ENCODE measurements at regions of chr9 and their contacts with region 1.

Region 1: DNA sequence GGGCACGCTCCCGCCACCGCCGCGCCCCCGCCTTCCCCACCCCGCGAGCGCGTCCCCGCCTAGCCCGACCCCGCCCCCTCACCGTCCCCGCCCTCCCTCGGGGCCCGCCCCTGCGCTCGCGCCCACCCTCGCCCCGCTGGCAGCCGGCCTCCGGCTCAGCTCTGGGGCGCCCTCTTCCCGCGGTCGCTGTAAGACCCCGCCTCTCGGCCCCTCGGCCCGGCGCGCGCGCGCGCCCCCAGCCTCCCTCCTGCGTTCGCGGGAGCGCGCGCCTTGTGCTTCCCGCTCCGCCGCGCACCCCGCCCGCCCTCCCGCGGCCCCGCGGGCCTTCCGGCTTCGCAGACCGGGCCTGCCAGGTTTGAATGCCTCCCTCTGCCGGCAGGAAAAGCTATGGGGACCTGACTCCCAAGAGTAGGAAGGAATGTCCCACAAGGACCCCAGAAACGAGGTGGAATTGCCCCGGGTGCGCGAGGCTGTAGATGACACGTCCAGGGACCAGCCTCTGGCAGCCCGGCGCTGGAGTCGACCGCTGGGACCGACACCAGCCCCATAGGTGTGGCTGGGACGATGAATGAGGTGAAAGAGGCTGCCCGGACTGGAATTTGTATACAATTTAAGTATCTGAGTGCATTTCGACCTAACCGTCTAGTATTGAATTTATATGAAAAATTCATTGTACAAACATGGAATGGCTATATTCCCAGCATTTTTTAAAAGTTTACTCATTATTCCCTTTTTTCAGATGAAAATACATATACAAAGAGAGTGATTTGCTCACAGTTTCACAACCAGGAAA is 416 bp upstream of the PTBP3 start:
- DNase-seq: peak; percentile 95
- ATAC-seq: peak; percentile 93
- H3K4me3 ChIP-seq: peak overlapping the region; percentile 95
- H3K27ac ChIP-seq: peak overlapping the region; percentile 92
- H3K4me1 ChIP-seq: peaks cover 2% of the 10 kb centered on the region; the same call in 1 of the 2 replicates
- H3K27me3 ChIP-seq: no peaks in the 10 kb centered on the region
- CTCF ChIP-seq: peak; percentile 50
- POLR2A ChIP-seq: 0 out of 2 replicates have a peak, but pooled peaks have one; percentile 0
- RAD21 ChIP-seq: peak; percentile 43

Region 2: GRCh38 chr9:111759762-111760639 is 573.8 kb before region 1 on chr9:
- CTCF ChIA-PET with region 1: no interaction called
- POLR2A ChIA-PET with region 1: no interaction called
- dilution Hi-C with region 1: no loop called
- in situ Hi-C with region 1: no loop called
- intact Hi-C with region 1: loop called (anchors 10 kb)
- DNase-seq: peak; percentile 91
- ATAC-seq: peak; percentile 95
- H3K4me3 ChIP-seq: no peak overlapping the region
- H3K27ac ChIP-seq: peak overlapping the region; percentile 24; the same call in 1 of the 2 replicates
- H3K4me1 ChIP-seq: peaks cover 3% of the 10 kb centered on the region; the same call in 1 of the 2 replicates
- H3K27me3 ChIP-seq: no peaks in the 10 kb centered on the region
- CTCF ChIP-seq: peak; percentile 83
- POLR2A ChIP-seq: no peak
- RAD21 ChIP-seq: peak; percentile 90

Region 3: GRCh38 chr9:112097712-112098688 is 235.8 kb before region 1 on chr9:
- CTCF ChIA-PET with region 1: interaction called, 11 read pairs
- POLR2A ChIA-PET with region 1: no interaction called
- dilution Hi-C with region 1: no loop called
- in situ Hi-C with region 1: no loop called
- intact Hi-C with region 1: loop called (anchors 1 kb)
- DNase-seq: peak; percentile 77
- ATAC-seq: peak; percentile 95
- H3K4me3 ChIP-seq: no peak overlapping the region
- H3K27ac ChIP-seq: no peak overlapping the region
- H3K4me1 ChIP-seq: no peaks in the 10 kb centered on the region
- H3K27me3 ChIP-seq: no peaks in the 10 kb centered on the region
- CTCF ChIP-seq: peak; percentile 93
- POLR2A ChIP-seq: peak; percentile 31; the same call in 1 of the 2 replicates
- RAD21 ChIP-seq: peak; percentile 93

Region 4: DNA sequence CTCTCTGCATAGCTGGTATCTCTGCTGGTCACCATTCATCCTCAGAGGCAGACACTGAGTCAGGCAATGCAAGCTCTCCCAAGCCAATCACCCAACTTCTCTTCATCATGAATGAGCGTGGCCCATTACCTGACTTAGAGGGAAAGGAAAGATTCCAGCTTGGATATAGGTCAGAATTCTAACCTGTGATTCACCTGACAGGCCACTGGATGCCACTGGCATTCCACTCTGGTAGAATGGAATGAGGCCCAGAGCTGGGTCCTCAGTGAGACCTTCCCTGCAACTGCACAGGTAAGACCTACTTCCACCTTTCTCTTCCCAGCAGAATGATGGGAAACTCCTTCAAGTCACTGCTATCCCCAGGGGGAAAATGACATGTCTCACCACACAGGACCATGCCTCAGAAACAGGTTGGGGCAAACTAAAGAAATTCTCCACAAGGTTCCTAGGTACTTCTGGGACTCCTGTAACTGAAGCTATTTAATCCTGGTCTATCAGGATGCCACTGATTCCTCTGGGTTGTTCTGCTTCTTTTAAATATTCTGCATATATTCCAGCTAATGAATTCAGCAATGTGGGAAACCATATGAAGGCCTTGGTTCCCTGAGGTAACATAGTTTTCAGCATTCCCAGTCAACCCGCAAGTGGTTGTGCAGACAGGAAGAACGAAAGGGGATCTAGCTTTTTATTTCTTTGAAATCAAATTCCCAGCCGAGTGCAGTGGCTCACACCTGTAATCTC is 220.7 kb before region 1 on chr9:
- CTCF ChIA-PET with region 1: interaction called, 3 read pairs
- POLR2A ChIA-PET with region 1: no interaction called
- dilution Hi-C with region 1: no loop called
- in situ Hi-C with region 1: no loop called
- intact Hi-C with region 1: loop called (anchors 1 kb)
- DNase-seq: no peak
- ATAC-seq: peak; percentile 66
- H3K4me3 ChIP-seq: no peak overlapping the region
- H3K27ac ChIP-seq: no peak overlapping the region
- H3K4me1 ChIP-seq: peaks cover 5% of the 10 kb centered on the region; the same call in 1 of the 2 replicates
- H3K27me3 ChIP-seq: no peaks in the 10 kb centered on the region
- CTCF ChIP-seq: peak; percentile 44
- POLR2A ChIP-seq: no peak
- RAD21 ChIP-seq: peak; percentile 56

Region 5: DNA sequence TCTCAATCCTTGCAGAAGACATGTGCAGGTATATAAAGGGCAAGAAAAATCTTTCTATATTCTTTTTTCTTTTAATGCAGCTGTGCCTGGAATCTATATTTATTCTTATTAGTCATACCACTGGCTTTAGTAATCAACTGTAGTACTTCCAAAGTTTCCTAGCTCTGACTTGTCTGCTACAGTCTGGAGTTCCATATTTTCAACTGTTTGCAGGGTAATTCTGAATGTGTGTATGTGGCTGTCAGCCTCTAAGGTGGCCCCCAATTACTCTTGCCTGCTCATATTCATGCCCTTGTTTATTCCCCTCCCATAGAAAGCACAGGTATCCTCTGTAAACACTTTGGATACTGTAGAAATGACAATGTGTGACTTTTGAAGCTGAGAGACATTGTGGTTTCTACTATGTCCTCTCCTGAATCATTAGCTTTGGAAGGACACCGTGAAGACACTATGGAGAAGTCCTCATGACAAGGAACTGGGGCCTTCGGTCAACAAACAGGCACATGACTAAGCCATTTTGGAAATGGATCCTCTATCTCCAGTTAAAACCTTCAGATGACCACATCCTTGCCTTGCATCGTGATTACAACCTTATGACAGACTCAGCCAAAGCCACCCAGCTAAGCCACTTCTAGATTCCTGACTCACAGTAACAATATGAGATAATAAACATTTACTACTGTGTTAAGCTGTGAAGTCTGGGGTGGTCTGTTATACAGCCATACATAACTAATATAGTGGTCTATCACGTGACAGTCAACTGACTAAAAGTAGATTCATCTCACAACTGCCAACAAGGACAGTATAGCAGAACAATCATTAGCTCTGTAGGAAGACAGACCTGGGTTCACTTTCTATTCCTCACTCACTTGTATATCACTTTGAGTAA is 109.2 kb before region 1 on chr9:
- CTCF ChIA-PET with region 1: no interaction called
- POLR2A ChIA-PET with region 1: no interaction called
- dilution Hi-C with region 1: no loop called
- in situ Hi-C with region 1: no loop called
- intact Hi-C with region 1: loop called (anchors 5 kb)
- DNase-seq: peak; percentile 93
- ATAC-seq: peak; percentile 92
- H3K4me3 ChIP-seq: no peak overlapping the region; the same call in 1 of the 2 replicates
- H3K27ac ChIP-seq: peak overlapping the region; percentile 57; the same call in 1 of the 2 replicates
- H3K4me1 ChIP-seq: peaks cover 8% of the 10 kb centered on the region
- H3K27me3 ChIP-seq: no peaks in the 10 kb centered on the region
- CTCF ChIP-seq: no peak
- POLR2A ChIP-seq: 0 out of 2 replicates have a peak, but pooled peaks have one; percentile 31
- RAD21 ChIP-seq: no peak; the same call in 1 of the 2 replicates

Region 6: GRCh38 chr9:112631313-112632070 is 297.7 kb after region 1 on chr9:
- CTCF ChIA-PET with region 1: no interaction called
- POLR2A ChIA-PET with region 1: no interaction called
- dilution Hi-C with region 1: no loop called
- in situ Hi-C with region 1: no loop called
- intact Hi-C with region 1: no loop called
- DNase-seq: no peak
- ATAC-seq: no peak
- H3K4me3 ChIP-seq: no peak overlapping the region
- H3K27ac ChIP-seq: no peak overlapping the region
- H3K4me1 ChIP-seq: no peaks in the 10 kb centered on the region
- H3K27me3 ChIP-seq: no peaks in the 10 kb centered on the region
- CTCF ChIP-seq: no peak
- POLR2A ChIP-seq: no peak
- RAD21 ChIP-seq: no peak

Measured in IMR-90 (cell line).